ENCODE measurements at regions of chr19 and their contacts with region 1.

Region 1: GRCh38 chr19:49877020-49877878 is at the starts of genes AKT1S1 and TBC1D17:
- DNase-seq: peak; percentile 96 to 100
- H3K4me3 ChIP-seq: peak within 1 kb of the TSS; percentile 90 to 95 (median 92)
- H3K27ac ChIP-seq: peak within 1 kb of the TSS; percentile 99
- H3K4me1 ChIP-seq: peaks cover 0 to 13% (median 7%) of the 10 kb centered on the region in 4 experiments; a peak in 6 of 7 replicates
- H3K27me3 ChIP-seq: no peaks in the 10 kb centered on the region
- CTCF ChIP-seq: no peak
- EP300 ChIP-seq: peak in 1 of 2 experiments; percentile 100; a peak in 2 of 3 replicates
- POLR2A ChIP-seq: peak; percentile 83 to 90
- RAD21 ChIP-seq: no peak
- total RNA-seq, gene AKT1S1: 45.9 and 46.7 TPM in 2 replicates
- total RNA-seq, gene TBC1D17: 44.9 and 47.6 TPM in 2 replicates

Region 2: GRCh38 chr19:49766007-49766937 is 111.0 kb before region 1 on chr19:
- CTCF ChIA-PET with region 1: no interaction called
- POLR2A ChIA-PET with region 1: interaction called, 11 read pairs
- DNase-seq: peak; percentile 96 to 100
- H3K4me3 ChIP-seq: peak overlapping the region; percentile 1 to 60 (median 35); a peak in 7 of 8 replicates
- H3K27ac ChIP-seq: peak overlapping the region; percentile 97
- H3K4me1 ChIP-seq: peaks cover 0 to 7% (median 3%) of the 10 kb centered on the region in 4 experiments; a peak in 5 of 7 replicates
- H3K27me3 ChIP-seq: no peaks in the 10 kb centered on the region
- CTCF ChIP-seq: no peak
- EP300 ChIP-seq: no peak
- POLR2A ChIP-seq: peak; percentile 54 to 98
- RAD21 ChIP-seq: no peak

Region 3: DNA sequence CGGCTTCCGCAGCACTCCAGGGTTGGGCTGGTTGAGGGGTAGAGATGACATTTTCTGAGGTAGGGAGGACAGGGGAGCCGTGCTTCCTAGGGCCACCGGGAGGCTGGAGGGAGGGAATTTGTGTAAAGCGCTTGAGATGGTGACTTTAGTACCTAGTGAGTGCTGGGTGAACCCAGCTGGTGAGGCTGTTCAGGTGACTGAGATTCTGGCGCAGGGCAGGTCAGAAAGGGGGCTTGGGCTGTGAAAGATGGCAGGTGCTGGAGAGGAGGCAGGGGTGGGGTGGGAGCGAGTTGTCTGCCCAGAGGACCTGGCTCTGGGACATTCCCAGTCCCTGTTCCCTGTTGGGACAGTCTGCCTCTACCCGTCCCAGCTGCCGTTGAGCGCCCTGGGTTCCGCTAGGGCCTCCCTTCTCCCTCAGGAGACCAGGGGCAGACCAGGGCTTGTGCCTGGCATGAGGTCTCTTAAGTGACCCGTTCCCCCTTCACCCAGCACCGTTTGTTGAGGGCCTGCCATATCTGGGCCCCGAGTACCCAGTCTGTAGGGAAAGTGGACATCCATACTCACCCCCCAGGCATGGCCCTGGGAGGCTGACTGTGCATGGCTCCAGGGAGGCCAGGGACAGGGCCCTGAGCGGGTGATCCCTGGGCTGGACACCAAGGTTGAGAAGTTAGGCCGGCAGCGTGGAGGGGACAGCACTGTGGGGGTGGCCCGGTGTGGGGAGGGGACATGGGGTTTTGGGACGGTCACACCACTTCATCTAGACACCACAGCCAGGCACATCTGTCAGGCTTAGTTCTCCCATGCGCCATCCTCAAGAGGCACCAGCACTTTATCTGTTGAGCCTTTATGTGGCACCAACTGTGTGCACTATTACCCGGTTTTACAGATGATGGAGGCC is 21.3 kb before region 1 on chr19:
- CTCF ChIA-PET with region 1: interaction called, 3 read pairs
- POLR2A ChIA-PET with region 1: interaction called, 247 read pairs
- DNase-seq: no peak
- H3K4me3 ChIP-seq: no peak overlapping the region
- H3K27ac ChIP-seq: no peak overlapping the region
- H3K4me1 ChIP-seq: peaks cover 0 to 9% (median 8%) of the 10 kb centered on the region in 4 experiments; a peak in 6 of 7 replicates
- H3K27me3 ChIP-seq: no peaks in the 10 kb centered on the region; a peak in 1 of 7 replicates
- CTCF ChIP-seq: no peak
- EP300 ChIP-seq: no peak
- POLR2A ChIP-seq: peak; percentile 70 to 73
- RAD21 ChIP-seq: no peak

Region 4: DNA sequence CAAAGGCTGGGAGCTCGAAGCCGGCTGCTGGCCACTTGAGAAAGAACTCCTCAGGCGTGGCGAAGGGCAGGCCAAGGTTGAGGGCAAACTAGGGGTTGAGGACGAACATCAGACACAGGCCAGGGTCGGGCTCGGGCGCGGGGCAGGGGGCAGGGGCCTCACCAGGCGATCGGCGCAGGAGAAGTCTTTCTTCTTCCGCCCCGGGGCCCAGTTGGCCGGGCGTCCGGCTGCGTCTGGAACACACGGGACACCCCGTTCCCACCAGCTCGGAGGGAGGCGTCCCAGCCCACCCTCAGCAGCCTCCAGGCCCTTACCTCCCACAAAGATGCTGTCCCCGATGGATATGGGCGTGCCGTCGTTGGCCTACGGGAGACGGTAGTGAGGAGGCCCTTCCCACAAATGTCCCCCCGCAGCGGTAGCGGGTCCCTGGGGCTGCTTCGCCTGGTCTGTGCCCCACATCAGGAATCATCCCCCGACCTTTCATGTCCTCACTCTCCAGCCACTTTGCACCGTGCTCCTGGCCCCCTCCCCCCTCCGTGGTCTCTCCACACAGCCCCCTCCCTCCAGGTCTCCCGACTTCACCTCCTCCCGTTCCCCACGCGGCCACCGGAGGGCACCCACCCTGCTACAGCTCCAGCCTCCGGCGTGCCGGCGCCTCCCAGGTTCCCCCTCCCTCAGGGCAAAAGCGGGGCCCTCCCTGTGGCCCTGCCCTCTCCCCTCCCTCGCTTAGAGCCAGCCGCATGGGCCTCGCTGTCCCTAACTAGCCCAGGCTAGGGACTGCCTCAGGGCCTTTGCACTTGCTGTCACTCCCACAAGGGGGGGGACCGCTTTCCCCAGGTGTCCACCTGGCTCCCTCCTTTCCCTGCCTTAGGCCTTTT is 14.6 kb before region 1 on chr19:
- CTCF ChIA-PET with region 1: interaction called, 6 read pairs
- POLR2A ChIA-PET with region 1: interaction called, 247 read pairs
- DNase-seq: peak; percentile 62 to 94
- H3K4me3 ChIP-seq: no peak overlapping the region
- H3K27ac ChIP-seq: no peak overlapping the region
- H3K4me1 ChIP-seq: peaks cover 0 to 16% (median 4%) of the 10 kb centered on the region in 4 experiments; a peak in 5 of 7 replicates
- H3K27me3 ChIP-seq: no peaks in the 10 kb centered on the region
- CTCF ChIP-seq: peak; percentile 61 to 73 (median 65)
- EP300 ChIP-seq: no peak
- POLR2A ChIP-seq: no peak
- RAD21 ChIP-seq: peak; percentile 19 to 49; a peak in 3 of 4 replicates

Region 5: DNA sequence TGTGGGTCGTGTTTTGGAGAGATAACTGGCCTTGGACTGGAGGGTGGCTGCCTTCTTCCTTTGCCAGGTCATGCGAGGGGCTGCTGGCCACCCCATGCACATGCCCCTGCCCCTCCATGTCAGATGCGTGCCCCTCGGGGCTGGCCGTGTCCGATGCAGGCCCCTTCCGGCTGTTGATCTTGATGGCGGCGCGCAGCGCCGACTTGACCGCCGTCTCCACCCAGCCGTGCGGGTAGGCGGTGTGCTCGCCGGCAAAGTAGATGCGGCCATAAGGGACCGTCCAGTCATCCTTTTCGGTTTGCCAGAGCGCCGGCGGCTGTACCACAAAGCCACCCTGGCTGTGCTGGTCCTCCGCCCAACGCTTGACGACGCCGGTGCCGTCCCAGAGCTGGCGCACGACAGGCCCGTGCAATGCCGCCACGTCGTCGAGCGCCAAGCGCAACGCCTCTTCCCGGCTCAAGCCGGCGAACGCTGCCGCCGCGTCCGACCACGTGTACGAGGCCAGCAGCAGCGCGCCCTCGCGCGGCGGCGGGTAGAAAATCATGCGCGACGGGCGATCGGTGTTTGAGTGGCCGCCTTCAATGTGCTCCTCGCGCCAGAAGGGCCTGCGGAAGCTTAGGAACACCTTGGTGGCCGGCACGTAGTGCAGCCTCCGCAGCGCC is 12.6 kb after region 1 on chr19:
- CTCF ChIA-PET with region 1: interaction called, 5 read pairs
- POLR2A ChIA-PET with region 1: interaction called, 55 read pairs
- DNase-seq: peak; percentile 88 to 94
- H3K4me3 ChIP-seq: peak overlapping the region; percentile 35 to 61 (median 42); a peak in 7 of 8 replicates
- H3K27ac ChIP-seq: no peak overlapping the region
- H3K4me1 ChIP-seq: peaks cover 0 to 10% (median 8%) of the 10 kb centered on the region in 4 experiments; a peak in 5 of 7 replicates
- H3K27me3 ChIP-seq: peaks cover 0 to 11% (median 6%) of the 10 kb centered on the region in 4 experiments; a peak in 4 of 7 replicates
- CTCF ChIP-seq: peak; percentile 77 to 94 (median 87)
- EP300 ChIP-seq: peak in 1 of 2 experiments; percentile 47; a peak in 1 of 3 replicates
- POLR2A ChIP-seq: no peak
- RAD21 ChIP-seq: peak; percentile 18 to 45; a peak in 3 of 4 replicates

Region 6: DNA sequence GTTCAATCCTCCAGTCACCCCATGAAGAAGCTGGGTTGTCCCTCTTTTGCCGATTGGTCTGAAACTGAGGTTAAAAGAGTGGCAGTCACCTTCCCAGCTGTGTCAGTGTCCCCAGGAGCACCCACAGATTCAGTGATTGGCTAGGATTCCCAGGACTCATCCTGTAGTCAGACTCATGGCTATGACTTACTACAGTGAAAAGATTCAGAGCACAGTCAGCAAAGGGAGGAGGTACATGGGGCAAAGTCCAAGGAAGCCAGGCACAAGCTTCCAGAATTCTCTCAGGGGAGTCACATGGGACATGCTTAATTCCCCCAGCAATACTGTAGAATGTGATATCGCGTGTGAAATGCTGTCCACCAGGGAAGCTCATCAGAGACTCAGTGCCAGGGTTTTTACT is 162.7 kb after region 1 on chr19:
- CTCF ChIA-PET with region 1: no interaction called
- POLR2A ChIA-PET with region 1: no interaction called
- DNase-seq: no peak
- H3K4me3 ChIP-seq: no peak overlapping the region
- H3K27ac ChIP-seq: no peak overlapping the region
- H3K4me1 ChIP-seq: no peaks in the 10 kb centered on the region
- H3K27me3 ChIP-seq: no peaks in the 10 kb centered on the region
- CTCF ChIP-seq: no peak
- EP300 ChIP-seq: no peak
- POLR2A ChIP-seq: no peak
- RAD21 ChIP-seq: no peak